ENCODE measurements at regions of chr22 and their contacts with region 1.

Region 1: DNA sequence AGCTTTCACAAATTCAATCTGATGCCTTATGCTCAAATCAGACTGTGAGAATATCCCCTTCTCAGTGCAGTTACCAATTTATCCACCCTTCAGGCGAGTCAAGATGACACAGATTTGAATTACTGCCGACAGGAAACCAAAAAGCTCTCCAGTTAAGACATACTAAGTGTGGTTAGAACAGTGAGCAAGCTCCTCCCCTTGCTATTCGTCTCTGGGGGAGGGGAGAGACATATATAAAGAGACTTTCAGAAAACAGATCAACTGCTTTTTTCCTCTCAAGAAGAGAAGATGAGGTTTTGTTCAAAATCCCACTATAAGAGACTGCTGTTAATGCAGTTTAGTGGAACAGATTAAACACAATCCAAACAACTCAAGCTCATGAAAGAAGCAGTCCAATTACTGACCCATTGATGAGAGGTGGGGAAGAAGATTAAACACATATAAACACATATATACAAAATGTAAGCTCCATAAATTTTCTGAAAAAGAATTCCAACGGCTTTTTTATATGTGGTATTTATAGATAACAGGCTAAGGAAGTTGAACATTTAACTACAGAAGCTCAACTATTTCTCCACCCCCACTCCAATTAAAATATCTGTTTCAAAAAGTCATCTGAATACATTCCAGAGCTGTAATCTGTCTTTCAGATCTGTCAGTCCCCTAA is 102.7 kb downstream of the MRTFA start:
- DNase-seq: peak; percentile 66
- ATAC-seq: peak; percentile 88
- H3K4me3 Mint-ChIP-seq: peak overlapping the region; percentile 78
- H3K27ac Mint-ChIP-seq: peak overlapping the region; percentile 92
- H3K4me1 Mint-ChIP-seq: peaks cover 66% of the 10 kb centered on the region
- H3K27me3 Mint-ChIP-seq: no peaks in the 10 kb centered on the region

Region 2: DNA sequence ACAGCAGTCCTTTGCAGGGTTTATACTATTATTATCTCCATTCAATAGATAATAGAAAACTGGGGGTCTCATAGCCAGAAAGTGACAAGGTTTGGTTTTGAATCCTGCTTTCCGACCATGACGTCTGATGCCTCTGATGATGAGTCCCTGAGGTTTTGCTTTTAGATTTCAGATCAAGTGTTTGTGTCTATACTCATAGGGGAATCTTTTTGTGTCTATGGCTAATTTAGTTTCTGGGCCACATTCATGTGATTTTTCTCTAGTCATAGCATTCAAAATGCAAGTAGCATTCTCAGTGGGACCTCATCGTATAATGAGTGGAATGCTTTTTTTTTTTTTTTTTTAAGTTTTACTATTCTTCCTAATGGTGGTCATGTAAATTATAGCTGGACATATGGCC is 283.2 kb before region 1 on chr22:
- CTCF ChIA-PET with region 1: no interaction called
- POLR2A ChIA-PET with region 1: no interaction called
- intact Hi-C with region 1: loop called in 1 of 2 experiments (anchors 1 kb)
- DNase-seq: peak; percentile 66
- ATAC-seq: peak; percentile 86
- H3K4me3 Mint-ChIP-seq: no peak overlapping the region
- H3K27ac Mint-ChIP-seq: peak overlapping the region; percentile 69
- H3K4me1 Mint-ChIP-seq: peaks cover 71% of the 10 kb centered on the region
- H3K27me3 Mint-ChIP-seq: no peaks in the 10 kb centered on the region

Region 3: DNA sequence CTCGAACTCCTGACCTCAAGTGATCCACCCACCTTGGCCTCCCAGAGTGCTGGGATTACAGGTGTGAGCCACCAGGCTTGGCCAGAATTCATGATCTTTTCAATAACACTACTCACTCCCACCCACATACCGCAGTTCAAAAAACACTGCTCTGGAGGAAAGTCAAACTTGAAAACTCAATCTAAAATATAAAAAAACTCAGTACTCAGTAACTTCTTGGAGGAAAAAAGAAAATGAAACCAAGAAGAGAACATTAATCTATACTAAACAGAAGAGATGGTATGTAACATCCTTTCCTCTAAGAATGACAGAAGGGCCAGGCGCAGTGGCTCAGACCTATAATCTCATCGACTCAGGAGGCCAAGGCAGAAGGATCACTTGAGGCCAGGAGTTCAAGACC is 44.3 kb after region 1 on chr22:
- CTCF ChIA-PET with region 1: interaction called, 12 read pairs
- POLR2A ChIA-PET with region 1: interaction called, 4 read pairs
- intact Hi-C with region 1: loop called (anchors 1 to 5 kb)
- DNase-seq: peak; percentile 68
- ATAC-seq: peak; percentile 87
- H3K4me3 Mint-ChIP-seq: no peak overlapping the region
- H3K27ac Mint-ChIP-seq: peak overlapping the region; percentile 82
- H3K4me1 Mint-ChIP-seq: peaks cover 22% of the 10 kb centered on the region
- H3K27me3 Mint-ChIP-seq: no peaks in the 10 kb centered on the region

Region 4: GRCh38 chr22:40583053-40583741 is 49.4 kb after region 1 on chr22:
- CTCF ChIA-PET with region 1: interaction called, 12 read pairs
- POLR2A ChIA-PET with region 1: interaction called, 4 read pairs
- intact Hi-C with region 1: loop called (anchors 1 to 5 kb)
- DNase-seq: peak; percentile 42
- ATAC-seq: peak; percentile 81
- H3K4me3 Mint-ChIP-seq: peak overlapping the region; percentile 17
- H3K27ac Mint-ChIP-seq: peak overlapping the region; percentile 80
- H3K4me1 Mint-ChIP-seq: peaks cover 35% of the 10 kb centered on the region
- H3K27me3 Mint-ChIP-seq: no peaks in the 10 kb centered on the region

Region 5: GRCh38 chr22:40714192-40714951 is 180.5 kb after region 1 on chr22:
- CTCF ChIA-PET with region 1: interaction called, 4 read pairs
- POLR2A ChIA-PET with region 1: interaction called, 3 read pairs
- intact Hi-C with region 1: loop called in 1 of 2 experiments (anchors 5 kb)
- DNase-seq: no peak
- ATAC-seq: no peak
- H3K4me3 Mint-ChIP-seq: no peak overlapping the region
- H3K27ac Mint-ChIP-seq: no peak overlapping the region
- H3K4me1 Mint-ChIP-seq: peaks cover 20% of the 10 kb centered on the region
- H3K27me3 Mint-ChIP-seq: peaks cover 3% of the 10 kb centered on the region

Region 6: GRCh38 chr22:40728731-40729189 is 194.9 kb after region 1 on chr22:
- CTCF ChIA-PET with region 1: no interaction called
- POLR2A ChIA-PET with region 1: no interaction called
- intact Hi-C with region 1: loop called in 1 of 2 experiments (anchors 2 kb)
- DNase-seq: peak; percentile 75
- ATAC-seq: peak; percentile 23
- H3K4me3 Mint-ChIP-seq: peak overlapping the region; percentile 64
- H3K27ac Mint-ChIP-seq: peak overlapping the region; percentile 94
- H3K4me1 Mint-ChIP-seq: peaks cover 50% of the 10 kb centered on the region
- H3K27me3 Mint-ChIP-seq: no peaks in the 10 kb centered on the region

Region 7: GRCh38 chr22:41688365-41689211 is 1154.7 kb after region 1 on chr22 and contains the start of gene SNU13:
- CTCF ChIA-PET with region 1: no interaction called
- POLR2A ChIA-PET with region 1: no interaction called
- intact Hi-C with region 1: no loop called
- DNase-seq: peak; percentile 96
- ATAC-seq: peak; percentile 93
- H3K4me3 Mint-ChIP-seq: peak within 1 kb of the TSS; percentile 98
- H3K27ac Mint-ChIP-seq: peak within 1 kb of the TSS; percentile 98
- H3K4me1 Mint-ChIP-seq: peaks cover 34% of the 10 kb centered on the region
- H3K27me3 Mint-ChIP-seq: no peaks in the 10 kb centered on the region
- total RNA-seq, gene SNU13: 275 to 281 TPM

Measured in activated CD4-positive, alpha-beta T cell treated with anti-CD3 and anti-CD28 coated beads for 36 hours (primary cell).